SK-MEL-5 (cell line): ENCODE measurements at regions of chr1 and their contacts with region 1.

Region 1: DNA sequence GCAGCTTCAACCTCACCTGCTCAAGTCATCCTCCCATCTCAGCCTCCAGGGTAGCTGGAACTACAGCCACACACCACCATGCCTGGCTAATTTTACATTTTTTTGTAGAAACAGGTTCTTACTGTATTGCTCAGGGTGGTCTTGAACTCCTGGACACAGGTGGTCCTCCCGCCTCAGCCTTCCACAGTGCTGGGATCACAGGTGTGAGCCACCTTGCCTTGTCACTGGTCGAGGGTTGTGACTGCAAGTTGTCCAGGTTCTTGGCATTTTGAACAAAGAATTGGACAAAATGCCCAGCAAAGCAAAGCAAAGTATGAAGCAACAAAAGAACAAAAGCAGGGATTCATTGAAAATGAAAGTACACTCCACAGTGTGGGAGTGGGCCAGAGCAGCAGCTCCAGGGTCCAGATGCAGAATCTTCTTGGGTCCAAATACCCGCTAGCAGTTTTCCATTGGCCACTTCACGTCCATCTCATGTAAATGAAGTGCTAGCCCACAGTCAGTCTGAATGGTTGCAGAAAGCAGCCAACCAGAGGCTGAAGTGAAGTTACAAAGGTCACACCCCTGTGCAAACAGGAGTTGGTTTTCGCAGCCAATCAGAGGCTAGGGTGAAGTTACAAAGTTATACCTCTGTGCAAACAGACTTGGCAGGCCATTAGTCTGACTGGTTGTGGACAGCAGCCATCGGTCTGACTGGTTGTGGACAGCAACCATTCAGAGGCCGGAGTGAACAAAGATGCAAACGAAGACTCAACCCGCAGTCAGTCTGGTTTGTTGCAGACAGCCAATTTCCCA is 109.5 kb upstream of the KIF26B start:
- DNase-seq: peak; percentile 41

Region 2: DNA sequence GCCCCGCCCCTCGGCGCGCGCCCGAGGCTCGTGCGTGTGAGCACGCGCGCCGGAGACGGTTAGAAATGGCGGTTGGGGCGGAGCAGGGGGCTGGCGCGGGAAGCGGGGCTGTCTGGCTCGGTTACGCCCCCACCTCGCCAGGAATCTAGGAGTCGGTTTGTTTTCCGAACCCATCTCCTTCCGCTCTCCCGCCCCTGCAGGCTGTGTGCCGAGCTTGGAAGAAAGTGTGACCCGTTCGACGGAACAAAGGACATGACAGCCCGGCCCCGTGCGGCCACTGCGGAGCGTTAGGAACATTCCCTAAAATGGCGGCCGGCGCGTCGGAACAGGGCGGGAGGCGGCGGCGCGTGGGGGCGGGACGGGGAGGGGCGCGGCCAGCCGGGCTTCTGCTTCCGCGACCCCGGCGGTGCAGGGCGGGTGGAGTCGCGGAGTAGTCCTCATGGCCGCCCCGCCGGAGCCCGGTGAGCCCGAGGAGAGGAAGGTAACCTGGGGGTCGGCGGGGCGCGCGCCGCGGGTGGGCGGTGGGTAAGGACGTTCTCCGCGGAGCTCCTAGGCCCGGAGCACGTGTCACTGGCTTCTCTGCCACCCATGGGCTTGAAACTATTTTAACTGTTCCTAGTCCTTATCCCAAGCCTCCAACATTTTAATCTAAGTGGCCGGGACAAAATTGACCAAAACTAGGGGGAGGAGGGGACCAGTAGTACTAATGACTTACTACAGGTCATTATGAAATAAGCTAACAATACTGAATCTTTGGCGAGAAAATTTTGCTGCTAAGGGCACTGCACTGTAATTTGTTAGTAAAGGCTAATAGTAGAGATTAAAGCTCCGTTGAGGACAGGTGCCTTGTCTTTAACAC is 209.8 kb before region 1 on chr1 and contains the start of gene COX20:
- in situ Hi-C with region 1: loop called (anchors 25 kb)
- DNase-seq: peak; percentile 89
- total RNA-seq, gene COX20: 35.0 and 37.9 TPM in 2 replicates